ENCODE measurements at regions of chrX and their contacts with region 1.

Region 1: GRCh38 chrX:1649621-1650020 is 34.8 kb downstream of the ASMT start:
- DNase-seq: no peak
- H3K4me3 Mint-ChIP-seq: no peak overlapping the region
- H3K27ac Mint-ChIP-seq: no peak overlapping the region
- H3K4me1 Mint-ChIP-seq: peaks cover 5% of the 10 kb centered on the region
- H3K27me3 Mint-ChIP-seq: no peaks in the 10 kb centered on the region

Region 2: GRCh38 chrX:1661048-1661921 is 11.7 kb after region 1 on chrX:
- CTCF ChIA-PET with region 1: no interaction called
- intact Hi-C with region 1: no loop called
- DNase-seq: peak; percentile 99
- H3K4me3 Mint-ChIP-seq: peak overlapping the region; percentile 81
- H3K27ac Mint-ChIP-seq: peak overlapping the region; percentile 92
- H3K4me1 Mint-ChIP-seq: peaks cover 56% of the 10 kb centered on the region
- H3K27me3 Mint-ChIP-seq: no peaks in the 10 kb centered on the region

Region 3: GRCh38 chrX:2595258-2595657 is 945.6 kb after region 1 on chrX:
- CTCF ChIA-PET with region 1: no interaction called
- intact Hi-C with region 1: loop called (anchors 1 kb)
- DNase-seq: no peak
- H3K4me3 Mint-ChIP-seq: no peak overlapping the region
- H3K27ac Mint-ChIP-seq: no peak overlapping the region
- H3K4me1 Mint-ChIP-seq: no peaks in the 10 kb centered on the region
- H3K27me3 Mint-ChIP-seq: no peaks in the 10 kb centered on the region

Measured in activated naive CD4-positive, alpha-beta T cell treated with anti-CD3 and anti-CD28 coated beads for 36 hours (primary cell).